ENCODE measurements at regions of chr11 and their contacts with region 1.

Region 1: DNA sequence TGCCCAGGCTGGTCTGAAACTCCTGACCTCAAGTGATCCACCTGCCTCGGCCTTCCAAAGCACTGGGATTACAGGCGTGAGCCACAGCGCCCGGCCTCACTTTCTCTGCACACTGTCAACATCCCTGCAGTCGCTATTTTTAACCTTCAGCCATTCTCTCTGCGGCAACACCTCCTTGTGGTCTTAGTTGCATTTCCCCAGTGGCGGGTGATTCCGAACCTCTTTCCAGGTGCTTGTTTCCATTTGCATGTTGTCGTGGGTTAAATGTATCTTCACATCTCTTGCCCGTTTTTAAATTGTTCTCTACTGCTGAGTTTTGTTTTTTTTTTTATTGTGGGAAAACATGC is 2.2 kb upstream of the SCT start:
- DNase-seq: no peak
- H3K4me3 Mint-ChIP-seq: no peak overlapping the region
- H3K27ac Mint-ChIP-seq: no peak overlapping the region
- H3K4me1 Mint-ChIP-seq: no peaks in the 10 kb centered on the region
- H3K27me3 Mint-ChIP-seq: no peaks in the 10 kb centered on the region
- CTCF ChIP-seq: no peak

Region 2: DNA sequence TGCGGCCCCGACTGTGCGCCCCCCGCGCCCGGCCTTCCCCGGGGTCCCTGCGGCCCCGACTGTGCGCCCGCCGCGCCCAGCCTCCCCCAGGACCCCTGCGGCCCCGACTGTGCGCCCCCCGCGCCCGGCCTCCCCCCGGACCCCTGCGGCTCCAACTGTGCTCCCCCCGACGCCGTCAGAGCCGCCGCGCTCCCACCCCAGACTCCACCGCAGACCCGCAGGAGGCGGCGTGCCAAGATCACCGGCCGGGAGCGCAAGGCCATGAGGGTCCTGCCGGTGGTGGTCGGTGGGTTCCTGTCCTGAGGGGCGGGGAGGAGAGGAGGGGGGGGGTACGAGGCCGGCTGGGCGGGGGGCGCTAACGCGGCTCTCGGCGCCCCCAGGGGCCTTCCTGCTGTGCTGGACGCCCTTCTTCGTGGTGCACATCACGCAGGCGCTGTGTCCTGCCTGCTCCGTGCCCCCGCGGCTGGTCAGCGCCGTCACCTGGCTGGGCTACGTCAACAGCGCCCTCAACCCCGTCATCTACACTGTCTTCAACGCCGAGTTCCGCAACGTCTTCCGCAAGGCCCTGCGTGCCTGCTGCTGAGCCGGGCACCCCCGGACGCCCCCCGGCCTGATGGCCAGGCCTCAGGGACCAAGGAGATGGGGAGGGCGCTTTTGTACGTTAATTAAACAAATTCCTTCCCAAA is 11.0 kb after region 1 on chr11:
- CTCF ChIA-PET with region 1: no interaction called
- POLR2A ChIA-PET with region 1: interaction called, 10 read pairs
- intact Hi-C with region 1: no loop called
- DNase-seq: no peak
- H3K4me3 Mint-ChIP-seq: no peak overlapping the region
- H3K27ac Mint-ChIP-seq: no peak overlapping the region
- H3K4me1 Mint-ChIP-seq: no peaks in the 10 kb centered on the region
- H3K27me3 Mint-ChIP-seq: no peaks in the 10 kb centered on the region
- CTCF ChIP-seq: no peak

Region 3: GRCh38 chr11:774951-775781 is 146.0 kb after region 1 on chr11:
- CTCF ChIA-PET with region 1: no interaction called
- POLR2A ChIA-PET with region 1: no interaction called
- intact Hi-C with region 1: no loop called
- DNase-seq: peak; percentile 78
- H3K4me3 Mint-ChIP-seq: peak overlapping the region; percentile 85
- H3K27ac Mint-ChIP-seq: peak overlapping the region; percentile 81
- H3K4me1 Mint-ChIP-seq: peaks cover 11% of the 10 kb centered on the region
- H3K27me3 Mint-ChIP-seq: no peaks in the 10 kb centered on the region
- CTCF ChIP-seq: no peak